ENCODE measurements at regions of chr6 and their contacts with region 1.

Region 1: GRCh38 chr6:150395398-150396009 is 26.7 kb downstream of the IYD start:
- DNase-seq: peak; percentile 65
- ATAC-seq: peak; percentile 74
- H3K4me3 ChIP-seq: no peak overlapping the region
- H3K4me3 Mint-ChIP-seq: no peak overlapping the region
- H3K27ac ChIP-seq: no peak overlapping the region
- H3K27ac Mint-ChIP-seq: no peak overlapping the region
- H3K4me1 ChIP-seq: no peaks in the 10 kb centered on the region
- H3K4me1 Mint-ChIP-seq: no peaks in the 10 kb centered on the region
- H3K27me3 ChIP-seq: peaks cover 0 to 7% (median under 1%) of the 10 kb centered on the region in 4 experiments
- H3K27me3 Mint-ChIP-seq: peaks cover 26% of the 10 kb centered on the region
- CTCF ChIP-seq: peak; percentile 84

Region 2: GRCh38 chr6:150068720-150069648 is 326.5 kb before region 1 on chr6 and contains the start of gene ULBP3:
- CTCF ChIA-PET with region 1: interaction called, 18 read pairs
- POLR2A ChIA-PET with region 1: no interaction called
- intact Hi-C with region 1: no loop called
- DNase-seq: peak; percentile 80
- ATAC-seq: peak; percentile 90
- H3K4me3 ChIP-seq: peak within 1 kb of the TSS; percentile 11 to 71 (median 70)
- H3K4me3 Mint-ChIP-seq: peak within 1 kb of the TSS; percentile 87
- H3K27ac ChIP-seq: no peak within 1 kb of the TSS
- H3K27ac Mint-ChIP-seq: peak within 1 kb of the TSS; percentile 38
- H3K4me1 ChIP-seq: peaks cover 5 to 18% of the 10 kb centered on the region in 2 donors
- H3K4me1 Mint-ChIP-seq: peaks cover 23% of the 10 kb centered on the region
- H3K27me3 ChIP-seq: peaks cover 0 to 22% (median 4%) of the 10 kb centered on the region in 4 experiments
- H3K27me3 Mint-ChIP-seq: peaks cover 18% of the 10 kb centered on the region
- CTCF ChIP-seq: peak; percentile 50
- total RNA-seq, gene ULBP3: 0.61 and 0.69 TPM in 2 replicates

Region 3: DNA sequence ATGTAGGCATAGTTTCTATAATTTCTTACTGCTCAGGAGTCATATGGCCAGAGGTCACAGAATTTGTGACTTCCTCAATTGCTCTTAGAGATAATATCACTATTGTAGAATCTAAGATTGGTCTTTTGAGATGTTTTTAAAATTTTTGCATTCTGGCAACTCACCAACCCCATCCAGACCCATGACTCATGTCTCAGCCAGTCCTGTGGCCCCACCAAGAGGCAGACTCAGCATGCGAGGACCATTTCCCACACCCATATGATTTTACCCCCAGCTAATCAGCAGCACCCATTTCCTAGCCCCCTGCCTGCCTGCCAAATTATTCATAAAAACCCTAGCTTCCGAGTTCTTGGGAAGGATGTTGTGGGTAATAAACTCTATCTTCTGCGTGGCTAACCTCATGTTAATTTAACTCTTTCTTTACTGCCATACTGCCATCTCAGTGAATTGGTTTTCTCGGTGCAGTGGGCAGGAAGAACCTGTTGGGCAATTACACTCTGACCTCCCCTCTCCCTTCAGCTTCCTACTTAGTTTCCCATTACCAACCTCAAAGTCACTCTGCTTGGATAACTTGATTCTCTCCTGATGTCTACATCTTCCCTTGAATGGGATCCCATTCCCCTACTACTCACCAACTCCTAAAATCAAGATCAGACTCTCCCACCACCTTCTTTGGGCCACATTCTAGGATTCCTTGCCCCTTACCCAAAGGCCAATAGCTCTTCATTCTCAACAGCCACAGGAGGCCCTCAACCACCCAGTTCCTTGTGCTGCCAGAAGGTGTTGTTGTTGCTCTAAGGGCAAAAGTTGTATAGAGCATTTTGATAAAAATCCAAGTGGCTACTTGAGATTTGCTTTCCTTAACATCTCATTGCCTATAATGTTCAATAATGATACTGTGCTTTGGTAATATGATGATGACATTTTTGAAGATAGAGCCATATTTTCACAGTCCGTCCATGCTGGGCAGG is 42.9 kb before region 1 on chr6:
- CTCF ChIA-PET with region 1: no interaction called
- POLR2A ChIA-PET with region 1: no interaction called
- intact Hi-C with region 1: no loop called
- DNase-seq: no peak
- ATAC-seq: no peak
- H3K4me3 ChIP-seq: no peak overlapping the region
- H3K4me3 Mint-ChIP-seq: no peak overlapping the region
- H3K27ac ChIP-seq: no peak overlapping the region
- H3K27ac Mint-ChIP-seq: no peak overlapping the region
- H3K4me1 ChIP-seq: peaks cover 4 to 8% of the 10 kb centered on the region in 2 donors
- H3K4me1 Mint-ChIP-seq: peaks cover 5% of the 10 kb centered on the region
- H3K27me3 ChIP-seq: peaks cover 0 to 13% (median 0%) of the 10 kb centered on the region in 4 experiments
- H3K27me3 Mint-ChIP-seq: peaks cover 13% of the 10 kb centered on the region
- CTCF ChIP-seq: no peak

Region 4: GRCh38 chr6:150380256-150380655 is 15.2 kb before region 1 on chr6:
- CTCF ChIA-PET with region 1: interaction called, 14 read pairs
- POLR2A ChIA-PET with region 1: no interaction called
- intact Hi-C with region 1: no loop called
- DNase-seq: no peak
- ATAC-seq: no peak
- H3K4me3 ChIP-seq: no peak overlapping the region
- H3K4me3 Mint-ChIP-seq: no peak overlapping the region
- H3K27ac ChIP-seq: no peak overlapping the region
- H3K27ac Mint-ChIP-seq: no peak overlapping the region
- H3K4me1 ChIP-seq: no peaks in the 10 kb centered on the region
- H3K4me1 Mint-ChIP-seq: no peaks in the 10 kb centered on the region
- H3K27me3 ChIP-seq: peaks cover 0 to 8% (median 3%) of the 10 kb centered on the region in 4 experiments
- H3K27me3 Mint-ChIP-seq: peaks cover 33% of the 10 kb centered on the region
- CTCF ChIP-seq: no peak

Region 5: GRCh38 chr6:150409576-150410066 is 14.1 kb after region 1 on chr6:
- CTCF ChIA-PET with region 1: interaction called, 26 read pairs
- POLR2A ChIA-PET with region 1: no interaction called
- intact Hi-C with region 1: no loop called
- DNase-seq: peak; percentile 78
- ATAC-seq: peak; percentile 47
- H3K4me3 ChIP-seq: no peak overlapping the region
- H3K4me3 Mint-ChIP-seq: no peak overlapping the region
- H3K27ac ChIP-seq: no peak overlapping the region
- H3K27ac Mint-ChIP-seq: no peak overlapping the region
- H3K4me1 ChIP-seq: peaks cover 8% of the 10 kb centered on the region in 2 donors
- H3K4me1 Mint-ChIP-seq: peaks cover 5% of the 10 kb centered on the region
- H3K27me3 ChIP-seq: peaks cover 0 to 9% (median 5%) of the 10 kb centered on the region in 4 experiments
- H3K27me3 Mint-ChIP-seq: peaks cover 32% of the 10 kb centered on the region
- CTCF ChIP-seq: no peak

Region 6: DNA sequence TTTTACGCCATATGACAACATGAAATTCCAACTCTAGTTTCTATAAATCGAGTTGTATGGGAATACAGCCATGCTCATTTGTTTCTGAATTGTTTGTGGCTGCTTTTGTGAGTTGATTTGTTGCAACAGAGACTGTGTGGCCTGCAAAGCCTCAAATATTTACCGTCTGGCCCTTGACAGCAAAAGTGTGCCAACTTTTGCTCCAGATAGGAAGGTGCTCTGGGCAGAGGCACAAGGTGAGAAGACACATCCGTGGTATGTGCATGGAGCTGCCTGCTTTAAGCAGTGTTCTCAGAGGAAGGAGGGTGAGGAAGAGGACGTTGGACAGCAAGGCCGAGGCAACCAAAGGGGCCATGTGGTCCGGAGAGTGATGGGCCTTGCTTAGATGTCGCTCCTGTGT is 30.7 kb after region 1 on chr6:
- CTCF ChIA-PET with region 1: no interaction called
- POLR2A ChIA-PET with region 1: no interaction called
- intact Hi-C with region 1: no loop called
- DNase-seq: no peak
- ATAC-seq: no peak
- H3K4me3 ChIP-seq: no peak overlapping the region
- H3K4me3 Mint-ChIP-seq: no peak overlapping the region
- H3K27ac ChIP-seq: no peak overlapping the region
- H3K27ac Mint-ChIP-seq: no peak overlapping the region
- H3K4me1 ChIP-seq: no peaks in the 10 kb centered on the region
- H3K4me1 Mint-ChIP-seq: no peaks in the 10 kb centered on the region
- H3K27me3 ChIP-seq: no peaks in the 10 kb centered on the region
- H3K27me3 Mint-ChIP-seq: no peaks in the 10 kb centered on the region
- CTCF ChIP-seq: no peak